Head of caudate nucleus (tissue), 42 donors: ENCODE measurements at regions of chr12 and their contacts with region 1.

Region 1: GRCh38 chr12:32755654-32756475 is at the start of gene YARS2:
- DNase-seq: peak; percentile 85 to 98 (median 95)

Region 2: GRCh38 chr12:32679091-32679919 is 76.6 kb before region 1 on chr12 and contains the start of gene DNM1L:
- intact Hi-C with region 1: loop called (anchors 2 kb)
- DNase-seq: peak; percentile 86 to 98 (median 97)

Region 3: GRCh38 chr12:32918890-32919801 is 163.3 kb after region 1 on chr12:
- intact Hi-C with region 1: loop called (anchors 5 kb)
- DNase-seq: peak in 26 of 42 donors; percentile 10 to 70 (median 35)

Region 4: GRCh38 chr12:34022079-34022830 is 1266.4 kb after region 1 on chr12 and contains the start of gene ALG10:
- intact Hi-C with region 1: loop called (anchors 1 kb)
- DNase-seq: peak; percentile 93 to 98 (median 96)